ENCODE measurements at regions of chr1 and their contacts with region 1.

Region 1: GRCh38 chr1:179882243-179883039 is at the start of gene TOR1AIP1:
- DNase-seq: peak; percentile 95 to 99 (median 96)
- ATAC-seq: peak; percentile 73
- H3K4me3 ChIP-seq: peak within 1 kb of the TSS; percentile 83
- H3K4me3 Mint-ChIP-seq: peak within 1 kb of the TSS; percentile 98
- H3K27ac ChIP-seq: peak within 1 kb of the TSS; percentile 99
- H3K27ac Mint-ChIP-seq: peak within 1 kb of the TSS; percentile 100
- H3K4me1 ChIP-seq: peaks cover 26% of the 10 kb centered on the region
- H3K4me1 Mint-ChIP-seq: peaks cover 60% of the 10 kb centered on the region
- H3K27me3 ChIP-seq: no peaks in the 10 kb centered on the region
- H3K27me3 Mint-ChIP-seq: no peaks in the 10 kb centered on the region
- CTCF ChIP-seq: peak; percentile 16
- total RNA-seq, gene TOR1AIP1: 93.8 to 94.4 TPM

Region 2: GRCh38 chr1:178973666-178974101 is 908.8 kb before region 1 on chr1:
- CTCF ChIA-PET with region 1: no interaction called
- POLR2A ChIA-PET with region 1: no interaction called
- intact Hi-C with region 1: no loop called
- DNase-seq: peak in 1 of 14 experiments; percentile 2
- ATAC-seq: no peak
- H3K4me3 ChIP-seq: no peak overlapping the region
- H3K4me3 Mint-ChIP-seq: no peak overlapping the region
- H3K27ac ChIP-seq: no peak overlapping the region
- H3K27ac Mint-ChIP-seq: no peak overlapping the region
- H3K4me1 ChIP-seq: peaks cover 8% of the 10 kb centered on the region
- H3K4me1 Mint-ChIP-seq: no peaks in the 10 kb centered on the region
- H3K27me3 ChIP-seq: no peaks in the 10 kb centered on the region
- H3K27me3 Mint-ChIP-seq: peaks cover 6% of the 10 kb centered on the region
- CTCF ChIP-seq: no peak

Region 3: DNA sequence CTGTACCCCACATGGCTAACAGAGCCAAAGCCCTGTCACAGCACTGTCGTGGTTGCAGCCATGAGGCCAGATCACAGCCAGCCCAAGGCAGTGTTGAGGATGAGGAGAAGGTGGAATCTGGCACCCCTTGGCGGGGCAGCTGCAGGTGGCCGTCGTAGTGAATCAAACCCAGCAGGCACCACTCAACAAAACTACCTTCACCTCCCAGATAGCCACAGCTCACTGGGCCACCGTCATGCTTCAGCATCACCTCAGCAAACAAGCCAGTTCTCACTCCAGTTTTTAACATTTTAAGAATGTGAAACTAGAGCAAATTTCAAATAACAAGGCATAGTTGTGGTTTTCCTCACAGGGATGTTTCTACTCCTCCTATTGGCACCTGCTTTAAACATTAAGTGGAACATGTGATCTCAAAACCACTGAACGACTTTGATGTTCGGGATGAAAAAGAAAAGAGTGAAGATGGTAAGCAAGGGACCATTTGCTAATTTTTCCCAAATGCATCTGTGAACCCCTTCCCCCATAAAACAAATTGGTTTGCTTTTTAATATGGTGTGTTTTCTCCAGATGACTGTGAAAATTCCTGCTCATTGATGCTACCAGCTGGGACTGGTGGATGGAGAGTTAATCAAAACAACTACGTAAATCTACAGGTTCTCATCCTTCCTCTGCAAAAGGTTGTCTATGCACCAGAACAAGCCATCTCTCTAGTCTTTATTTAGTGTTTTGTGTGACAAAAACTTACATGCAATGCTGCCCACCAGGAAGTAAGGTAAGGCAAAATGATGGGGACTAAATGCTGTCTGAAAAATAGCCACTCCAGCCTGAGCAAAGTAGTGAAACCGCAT is 50.4 kb before region 1 on chr1:
- CTCF ChIA-PET with region 1: no interaction called
- POLR2A ChIA-PET with region 1: interaction called, 24 read pairs
- intact Hi-C with region 1: no loop called
- DNase-seq: peak in 5 of 14 experiments; percentile 6 to 64 (median 58)
- ATAC-seq: peak; percentile 83
- H3K4me3 ChIP-seq: peak overlapping the region; percentile 17
- H3K4me3 Mint-ChIP-seq: peak overlapping the region; percentile 85
- H3K27ac ChIP-seq: peak overlapping the region; percentile 10 to 44
- H3K27ac Mint-ChIP-seq: peak overlapping the region; percentile 84
- H3K4me1 ChIP-seq: peaks cover 29% of the 10 kb centered on the region
- H3K4me1 Mint-ChIP-seq: peaks cover 33% of the 10 kb centered on the region
- H3K27me3 ChIP-seq: no peaks in the 10 kb centered on the region
- H3K27me3 Mint-ChIP-seq: no peaks in the 10 kb centered on the region
- CTCF ChIP-seq: no peak

Region 4: GRCh38 chr1:179954493-179955297 is 72.3 kb after region 1 on chr1 and contains the start of gene CEP350:
- CTCF ChIA-PET with region 1: interaction called, 6 read pairs
- POLR2A ChIA-PET with region 1: interaction called, 113 read pairs
- intact Hi-C with region 1: loop called (anchors 1 kb)
- DNase-seq: peak; percentile 95 to 100 (median 97)
- ATAC-seq: peak; percentile 84
- H3K4me3 ChIP-seq: peak within 1 kb of the TSS; percentile 87
- H3K4me3 Mint-ChIP-seq: peak within 1 kb of the TSS; percentile 96
- H3K27ac ChIP-seq: peak within 1 kb of the TSS; percentile 82 to 90
- H3K27ac Mint-ChIP-seq: peak within 1 kb of the TSS; percentile 94
- H3K4me1 ChIP-seq: peaks cover 23% of the 10 kb centered on the region
- H3K4me1 Mint-ChIP-seq: peaks cover 71% of the 10 kb centered on the region
- H3K27me3 ChIP-seq: no peaks in the 10 kb centered on the region
- H3K27me3 Mint-ChIP-seq: no peaks in the 10 kb centered on the region
- CTCF ChIP-seq: no peak
- total RNA-seq, gene CEP350: 45.5 to 51.4 TPM

Region 5: DNA sequence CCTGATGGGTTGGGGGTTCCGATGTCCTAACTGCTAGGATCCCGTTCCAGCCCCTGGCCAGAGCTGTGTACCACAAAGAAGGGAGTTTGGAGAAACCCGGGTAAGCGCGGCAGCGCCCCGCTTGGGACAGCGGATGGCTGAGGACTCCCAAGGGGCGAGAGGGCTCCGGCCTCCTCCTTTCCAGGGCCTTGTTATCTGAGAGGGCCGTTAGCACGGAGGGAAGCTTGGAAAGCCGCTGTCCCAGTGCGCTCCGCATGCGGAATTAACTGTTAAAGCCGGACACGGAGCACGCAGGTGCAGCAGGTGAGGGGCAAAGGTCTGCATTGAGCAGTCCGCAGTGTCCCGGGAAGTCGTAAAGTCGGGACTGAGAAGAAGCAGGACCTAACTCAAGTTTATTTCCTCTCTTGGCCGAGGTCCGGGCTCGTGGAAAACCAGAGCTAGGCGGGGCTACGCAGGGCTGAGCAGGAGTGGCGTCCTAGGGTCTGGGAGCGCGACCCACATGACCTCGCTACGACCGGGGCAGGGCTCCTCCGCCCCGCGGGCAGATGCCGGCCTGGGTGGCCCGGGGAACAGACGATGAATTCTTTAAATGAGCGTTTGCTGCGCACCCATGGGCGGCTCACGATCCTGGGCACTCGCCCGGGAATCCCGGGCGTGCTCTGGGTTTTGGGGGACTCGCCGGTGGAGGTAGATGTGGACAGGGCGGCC is 352.1 kb after region 1 on chr1:
- CTCF ChIA-PET with region 1: no interaction called
- POLR2A ChIA-PET with region 1: no interaction called
- intact Hi-C with region 1: no loop called
- DNase-seq: no peak
- ATAC-seq: no peak
- H3K4me3 ChIP-seq: no peak overlapping the region
- H3K4me3 Mint-ChIP-seq: peak overlapping the region; percentile 6
- H3K27ac ChIP-seq: no peak overlapping the region
- H3K27ac Mint-ChIP-seq: no peak overlapping the region
- H3K4me1 ChIP-seq: peaks cover 62% of the 10 kb centered on the region
- H3K4me1 Mint-ChIP-seq: peaks cover 44% of the 10 kb centered on the region
- H3K27me3 ChIP-seq: peaks cover 82 to 93% of the 10 kb centered on the region in 2 experiments
- H3K27me3 Mint-ChIP-seq: peaks cover 95% of the 10 kb centered on the region
- CTCF ChIP-seq: no peak

Region 6: DNA sequence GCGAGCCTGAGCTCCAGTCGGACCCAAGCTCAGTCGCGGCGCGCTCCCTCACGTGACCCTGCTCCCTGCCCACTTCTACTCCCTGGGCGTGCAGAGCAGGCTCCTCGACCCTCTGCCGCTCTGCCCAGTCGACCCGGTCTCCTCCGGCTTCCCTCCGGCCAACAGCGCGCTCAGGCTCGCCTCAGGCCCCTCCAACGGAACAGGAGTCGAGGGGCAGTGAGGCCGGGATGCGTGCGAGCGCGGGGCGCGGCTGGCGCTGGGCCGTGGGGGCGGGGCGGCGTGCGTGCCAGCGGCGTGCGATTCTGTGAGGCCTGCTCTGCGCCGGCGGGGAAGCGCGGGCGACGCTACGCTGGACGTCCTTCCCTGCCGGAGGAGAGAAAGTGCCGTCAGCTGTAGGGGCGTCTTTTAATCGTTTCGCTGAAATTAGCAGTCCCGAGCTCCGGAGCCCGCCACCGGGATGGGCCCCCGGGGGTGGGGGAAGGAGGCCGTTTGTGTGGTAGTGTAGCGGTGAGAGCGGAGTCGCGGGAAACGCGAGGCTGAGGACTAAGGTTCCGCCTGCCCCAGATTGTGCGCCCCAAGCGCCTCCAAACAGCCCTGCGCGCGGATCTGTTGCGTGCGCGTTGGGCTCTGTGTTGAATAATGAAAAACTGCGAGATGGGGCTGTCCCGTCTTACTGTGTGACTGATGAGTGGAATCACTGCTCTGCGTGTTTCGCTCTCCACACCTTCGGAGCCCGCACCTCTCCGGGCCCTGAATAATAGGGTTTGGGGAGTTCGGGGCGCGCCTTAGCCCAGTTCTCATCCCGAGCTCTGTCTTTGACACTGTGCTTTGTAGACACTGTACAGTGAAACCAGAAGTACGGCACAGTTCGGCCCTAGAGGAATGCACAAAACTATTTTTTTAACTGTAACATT is 620.2 kb after region 1 on chr1 and contains the start of gene ACBD6:
- CTCF ChIA-PET with region 1: no interaction called
- POLR2A ChIA-PET with region 1: interaction called, 16 read pairs
- intact Hi-C with region 1: loop called in 1 of 2 experiments (anchors 10 kb)
- DNase-seq: peak; percentile 76 to 94 (median 83)
- ATAC-seq: peak; percentile 90
- H3K4me3 ChIP-seq: peak within 1 kb of the TSS; percentile 98
- H3K4me3 Mint-ChIP-seq: peak within 1 kb of the TSS; percentile 92
- H3K27ac ChIP-seq: peak within 1 kb of the TSS; percentile 74 to 85
- H3K27ac Mint-ChIP-seq: peak within 1 kb of the TSS; percentile 94
- H3K4me1 ChIP-seq: peaks cover 23% of the 10 kb centered on the region
- H3K4me1 Mint-ChIP-seq: peaks cover 43% of the 10 kb centered on the region
- H3K27me3 ChIP-seq: no peaks in the 10 kb centered on the region
- H3K27me3 Mint-ChIP-seq: no peaks in the 10 kb centered on the region
- CTCF ChIP-seq: no peak
- total RNA-seq, gene ACBD6: 28.2 to 28.8 TPM

Measured in CD4-positive, alpha-beta T cell (primary cell).